ENCODE measurements at regions of chr20 and their contacts with region 1.

Region 1: GRCh38 chr20:50516180-50516934 is 6.2 kb downstream of the PTPN1 start:
- DNase-seq: no peak
- ATAC-seq: peak; percentile 11
- H3K4me3 Mint-ChIP-seq: peak overlapping the region; percentile 99
- H3K27ac Mint-ChIP-seq: peak overlapping the region; percentile 99
- H3K4me1 Mint-ChIP-seq: peaks cover 93% of the 10 kb centered on the region
- H3K27me3 Mint-ChIP-seq: no peaks in the 10 kb centered on the region

Region 2: DNA sequence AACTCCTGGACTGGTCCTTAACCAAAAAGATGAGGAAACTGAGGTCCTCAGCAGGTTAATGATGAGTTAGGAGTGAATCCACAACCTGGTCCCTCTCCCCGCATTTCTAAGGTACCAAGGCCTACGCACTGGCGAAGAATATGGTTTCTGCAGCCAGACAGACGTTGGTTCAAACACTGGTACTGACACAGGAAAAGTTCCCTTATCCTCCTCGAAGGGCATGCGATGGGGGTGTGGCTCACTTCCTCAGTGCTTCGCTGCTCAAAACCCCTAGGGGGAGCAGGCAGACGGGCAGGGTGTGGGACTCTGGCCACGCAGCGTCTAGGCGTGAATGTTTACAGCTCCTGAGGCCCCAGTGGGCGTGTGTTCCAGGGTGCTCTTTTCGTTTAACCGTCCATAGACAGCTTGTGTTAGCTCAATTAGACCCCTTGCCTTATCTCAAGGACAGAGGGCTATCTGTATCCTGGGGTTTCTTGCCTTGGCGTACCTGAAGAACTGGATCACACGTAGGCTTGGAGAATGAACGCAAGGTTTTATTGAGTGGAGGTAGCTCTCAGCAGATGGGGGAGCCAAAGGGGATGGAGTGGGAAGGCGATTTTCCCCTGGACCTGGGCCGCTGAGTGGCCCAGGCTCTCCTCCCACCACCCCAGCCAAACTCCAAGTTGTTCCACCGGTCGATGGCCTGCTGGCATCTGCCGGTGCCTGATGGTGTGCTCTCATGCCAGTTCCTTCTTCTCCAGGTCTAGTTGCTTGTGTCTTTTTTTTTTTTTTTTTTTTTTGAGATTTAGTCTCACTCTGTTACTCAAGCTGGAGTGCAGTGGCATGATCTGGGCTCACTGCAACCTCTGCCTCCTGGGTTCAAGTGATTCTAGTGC is 38.0 kb before region 1 on chr20:
- CTCF ChIA-PET with region 1: interaction called, 7 read pairs
- POLR2A ChIA-PET with region 1: interaction called, 3 read pairs
- intact Hi-C with region 1: loop called in 1 of 2 experiments (anchors 5 kb)
- DNase-seq: peak; percentile 89
- ATAC-seq: peak; percentile 99
- H3K4me3 Mint-ChIP-seq: no peak overlapping the region
- H3K27ac Mint-ChIP-seq: peak overlapping the region; percentile 13
- H3K4me1 Mint-ChIP-seq: peaks cover 32% of the 10 kb centered on the region
- H3K27me3 Mint-ChIP-seq: no peaks in the 10 kb centered on the region

Region 3: DNA sequence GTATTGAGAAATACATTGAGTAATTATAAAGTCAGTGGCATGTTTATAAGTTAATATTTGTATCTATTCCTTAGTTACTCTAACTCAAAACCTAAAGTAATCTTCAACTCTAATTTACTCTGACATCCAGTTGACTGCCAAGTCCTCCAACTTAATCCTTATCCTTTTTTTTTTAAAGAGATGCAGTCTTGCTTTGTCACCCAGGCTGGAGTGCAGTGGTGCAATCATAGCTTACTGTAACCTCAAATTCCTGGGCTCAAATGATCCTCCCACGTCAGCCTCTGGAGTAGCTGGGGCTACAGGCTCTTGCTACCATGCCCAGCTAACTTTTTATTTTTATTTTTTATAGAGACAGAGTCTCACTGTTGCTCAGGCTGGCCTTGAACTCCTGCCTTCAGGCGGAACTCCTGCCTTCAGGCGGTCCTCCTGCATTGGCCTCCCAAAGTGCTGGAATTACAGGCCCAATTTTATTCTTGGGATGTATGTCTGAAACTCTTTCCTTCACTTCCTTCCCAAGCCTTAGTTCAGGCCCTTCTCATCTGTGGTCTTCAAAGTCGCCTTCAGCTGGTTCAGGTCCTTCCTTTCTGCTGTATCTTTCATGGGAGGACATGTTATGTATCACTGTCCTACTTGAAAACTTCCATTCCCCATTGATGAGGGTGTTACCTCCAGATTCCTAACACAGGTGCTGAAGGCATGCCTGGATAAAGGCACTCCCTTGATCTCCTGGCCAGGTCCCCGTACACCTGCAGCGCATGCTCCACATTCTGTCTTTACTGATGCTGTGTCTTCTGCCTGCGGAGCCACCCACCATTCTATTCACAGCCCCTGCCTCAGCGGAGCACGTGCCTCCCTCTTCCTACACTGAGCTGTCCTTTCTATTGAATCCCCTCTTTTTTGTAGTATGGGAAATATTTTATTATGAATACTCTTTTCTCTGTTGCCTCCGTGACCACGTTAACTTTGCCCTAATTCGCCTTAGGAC is 18.5 kb after region 1 on chr20:
- CTCF ChIA-PET with region 1: interaction called, 7 read pairs
- POLR2A ChIA-PET with region 1: interaction called, 3 read pairs
- intact Hi-C with region 1: loop called in 1 of 2 experiments (anchors 2 kb)
- DNase-seq: no peak
- ATAC-seq: no peak
- H3K4me3 Mint-ChIP-seq: no peak overlapping the region
- H3K27ac Mint-ChIP-seq: peak overlapping the region; percentile 56
- H3K4me1 Mint-ChIP-seq: peaks cover 73% of the 10 kb centered on the region
- H3K27me3 Mint-ChIP-seq: no peaks in the 10 kb centered on the region

Region 4: DNA sequence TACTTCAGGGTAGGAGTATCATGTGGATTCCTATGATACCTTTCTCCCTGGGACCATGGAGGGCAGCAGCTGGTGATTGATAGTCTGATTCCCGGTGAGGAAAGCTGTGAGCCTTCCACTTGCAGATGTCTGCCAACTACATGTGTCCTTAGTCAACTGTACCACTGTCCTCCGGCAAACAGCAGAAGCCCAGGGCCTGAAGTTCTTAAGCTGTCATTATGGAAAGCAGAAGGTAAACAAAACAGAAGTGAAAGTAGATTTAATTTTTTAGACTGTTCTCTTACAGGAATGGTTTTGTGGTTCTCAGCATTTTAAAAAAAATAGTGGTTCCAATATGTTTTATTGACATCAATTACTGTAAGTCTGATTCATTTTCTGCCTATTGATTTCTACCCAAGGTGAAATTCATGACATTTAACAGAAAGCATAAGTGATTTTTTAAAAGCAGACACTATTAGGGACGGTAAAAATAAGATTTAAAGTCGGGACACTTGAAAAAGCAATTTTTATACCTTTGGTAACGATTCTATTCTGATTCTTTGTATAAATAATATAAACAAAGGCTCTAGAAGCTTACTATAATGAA is 30.5 kb after region 1 on chr20:
- CTCF ChIA-PET with region 1: interaction called, 20 read pairs
- POLR2A ChIA-PET with region 1: interaction called, 7 read pairs
- intact Hi-C with region 1: loop called (anchors 1 to 2 kb)
- DNase-seq: peak; percentile 57
- ATAC-seq: peak; percentile 61
- H3K4me3 Mint-ChIP-seq: peak overlapping the region; percentile 67
- H3K27ac Mint-ChIP-seq: peak overlapping the region; percentile 95
- H3K4me1 Mint-ChIP-seq: peaks cover 72% of the 10 kb centered on the region
- H3K27me3 Mint-ChIP-seq: no peaks in the 10 kb centered on the region

Region 5: DNA sequence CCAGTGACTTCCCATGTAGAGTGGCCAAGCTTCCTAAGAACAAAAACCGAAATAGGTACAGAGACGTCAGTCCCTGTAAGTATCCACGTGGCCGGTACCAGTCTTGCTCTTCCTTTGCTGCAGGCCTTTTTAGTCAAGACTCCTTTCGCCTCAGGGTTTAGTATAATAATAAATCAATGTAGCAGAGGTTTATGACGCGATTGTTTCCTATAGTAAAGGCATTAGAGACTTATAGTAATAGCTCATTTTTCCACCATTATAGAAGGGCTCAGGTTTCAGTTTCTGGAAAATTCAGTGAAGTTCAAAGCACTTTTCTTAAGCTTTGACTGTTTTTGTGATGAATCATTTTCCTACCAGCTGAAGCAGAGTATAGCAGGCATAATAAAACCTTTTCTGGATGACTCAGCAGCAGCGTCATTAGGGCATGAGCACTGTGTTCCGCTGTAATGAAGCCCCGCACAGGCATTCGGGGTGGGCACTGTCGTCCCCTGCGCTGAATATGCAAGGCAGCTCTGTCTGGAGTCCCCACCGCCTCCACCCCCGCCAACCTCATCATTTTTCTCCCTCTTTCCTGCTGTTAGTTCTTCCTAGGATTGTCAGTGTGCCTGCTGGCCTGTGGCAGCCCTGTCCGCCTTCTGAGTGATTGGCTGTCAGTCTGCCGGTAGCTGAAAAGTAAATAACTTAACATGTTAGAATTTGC is 45.2 kb after region 1 on chr20:
- CTCF ChIA-PET with region 1: interaction called, 25 read pairs
- POLR2A ChIA-PET with region 1: interaction called, 29 read pairs
- intact Hi-C with region 1: loop called (anchors 1 kb)
- DNase-seq: peak; percentile 85
- ATAC-seq: peak; percentile 84
- H3K4me3 Mint-ChIP-seq: peak overlapping the region; percentile 76
- H3K27ac Mint-ChIP-seq: peak overlapping the region; percentile 99
- H3K4me1 Mint-ChIP-seq: peaks cover 85% of the 10 kb centered on the region
- H3K27me3 Mint-ChIP-seq: no peaks in the 10 kb centered on the region

Region 6: GRCh38 chr20:50569864-50570836 is 53.8 kb after region 1 on chr20:
- CTCF ChIA-PET with region 1: interaction called, 29 read pairs
- POLR2A ChIA-PET with region 1: interaction called, 6 read pairs
- intact Hi-C with region 1: loop called in 1 of 2 experiments (anchors 1 kb)
- DNase-seq: peak; percentile 77
- ATAC-seq: peak; percentile 92
- H3K4me3 Mint-ChIP-seq: no peak overlapping the region
- H3K27ac Mint-ChIP-seq: peak overlapping the region; percentile 77
- H3K4me1 Mint-ChIP-seq: peaks cover 82% of the 10 kb centered on the region
- H3K27me3 Mint-ChIP-seq: no peaks in the 10 kb centered on the region

Measured in activated CD4-positive, alpha-beta T cell treated with anti-CD3 and anti-CD28 coated beads for 36 hours (primary cell).